Common myeloid progenitor, CD34-positive (primary cell): ENCODE measurements at regions of chr1 and their contacts with region 1.

Region 1: DNA sequence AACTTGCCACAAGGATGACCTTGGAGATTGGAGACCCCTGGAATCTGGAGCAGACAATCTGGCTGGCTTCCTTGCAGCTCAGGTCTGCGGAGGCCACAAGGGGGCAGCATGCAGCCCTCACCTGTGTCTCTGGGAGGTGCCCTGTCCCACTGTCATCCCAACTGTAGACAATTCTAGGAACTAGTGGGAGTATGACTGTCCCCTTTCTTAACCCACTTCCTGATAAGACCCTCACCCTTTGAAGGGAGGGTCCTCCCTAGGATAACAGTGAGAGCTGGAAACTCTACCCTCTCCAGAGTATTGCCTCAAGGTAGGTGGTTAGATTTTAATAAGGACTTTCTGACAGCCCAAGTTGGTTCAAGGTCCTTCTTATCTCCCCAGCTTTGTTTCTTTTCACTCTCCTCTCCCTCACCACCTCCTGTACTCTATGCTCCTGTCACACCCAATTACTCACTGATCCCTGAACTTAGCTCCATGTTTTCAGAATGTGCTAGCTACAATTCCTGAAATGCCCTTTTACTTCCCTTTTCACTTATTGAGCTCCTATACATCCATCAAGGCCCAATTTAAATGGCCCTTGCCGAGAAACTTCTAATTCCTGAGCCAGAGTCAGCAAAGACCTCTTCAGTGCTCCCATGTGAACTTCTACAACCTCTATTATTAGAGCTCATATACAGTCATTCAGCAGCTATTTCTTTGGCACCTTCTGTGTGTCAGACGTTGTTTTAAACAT is 9.2 kb upstream of the KCNQ4 start:
- DNase-seq: peak; percentile 49 to 63 (median 56)
- H3K4me3 ChIP-seq: no peak overlapping the region
- H3K27ac ChIP-seq: no peak overlapping the region
- H3K4me1 ChIP-seq: peaks cover 8 to 14% (median 12%) of the 10 kb centered on the region in 4 experiments
- H3K27me3 ChIP-seq: no peaks in the 10 kb centered on the region

Region 2: DNA sequence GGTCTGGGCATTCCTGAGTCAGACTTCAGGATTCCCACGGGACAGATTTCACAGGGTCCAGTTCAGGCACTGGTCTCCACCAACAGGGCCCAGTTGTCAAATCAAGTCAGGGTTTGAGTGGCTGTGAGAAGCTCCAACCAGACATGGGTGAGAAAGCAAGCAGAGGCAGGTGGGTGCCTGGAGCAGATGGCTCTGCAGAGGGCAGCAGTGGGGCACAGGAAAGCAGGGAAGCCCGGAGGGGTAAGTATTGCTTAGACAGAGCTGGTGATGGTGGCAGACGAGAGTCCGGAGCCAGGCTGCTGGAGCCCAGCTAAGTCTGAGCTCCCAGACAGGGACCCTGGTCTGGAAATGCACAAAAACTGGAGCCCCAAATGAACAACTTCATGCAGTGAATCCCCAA is 149.4 kb before region 1 on chr1:
- CTCF ChIA-PET with region 1: interaction called, 12 read pairs
- POLR2A ChIA-PET with region 1: no interaction called
- DNase-seq: peak; percentile 36 to 60 (median 58)
- H3K4me3 ChIP-seq: no peak overlapping the region
- H3K27ac ChIP-seq: no peak overlapping the region
- H3K4me1 ChIP-seq: peaks cover 0 to 22% (median 12%) of the 10 kb centered on the region in 4 experiments
- H3K27me3 ChIP-seq: peaks cover 0 to 2% (median 0%) of the 10 kb centered on the region in 5 experiments

Region 3: GRCh38 chr1:40763742-40764532 is 10.5 kb before region 1 on chr1:
- CTCF ChIA-PET with region 1: interaction called, 30 read pairs
- POLR2A ChIA-PET with region 1: no interaction called
- DNase-seq: no peak
- H3K4me3 ChIP-seq: no peak overlapping the region
- H3K27ac ChIP-seq: no peak overlapping the region
- H3K4me1 ChIP-seq: peaks cover 0 to 7% (median 2%) of the 10 kb centered on the region in 4 experiments
- H3K27me3 ChIP-seq: no peaks in the 10 kb centered on the region

Region 4: GRCh38 chr1:40802078-40802741 is 27.8 kb after region 1 on chr1:
- CTCF ChIA-PET with region 1: interaction called, 71 read pairs
- POLR2A ChIA-PET with region 1: no interaction called
- DNase-seq: peak; percentile 87 to 93 (median 90)
- H3K4me3 ChIP-seq: peak overlapping the region; percentile 6 to 78 (median 53)
- H3K27ac ChIP-seq: peak overlapping the region in 1 of 2 experiments; percentile 40
- H3K4me1 ChIP-seq: peaks cover 4 to 63% (median 46%) of the 10 kb centered on the region in 4 experiments
- H3K27me3 ChIP-seq: no peaks in the 10 kb centered on the region

Region 5: GRCh38 chr1:40825435-40825788 is 51.0 kb after region 1 on chr1:
- CTCF ChIA-PET with region 1: interaction called, 21 read pairs
- POLR2A ChIA-PET with region 1: no interaction called
- DNase-seq: peak in 2 of 3 donors; percentile 66 to 71
- H3K4me3 ChIP-seq: peak overlapping the region in 1 of 7 experiments; percentile 23
- H3K27ac ChIP-seq: no peak overlapping the region
- H3K4me1 ChIP-seq: peaks cover 0 to 33% (median 28%) of the 10 kb centered on the region in 4 experiments
- H3K27me3 ChIP-seq: no peaks in the 10 kb centered on the region

Region 6: DNA sequence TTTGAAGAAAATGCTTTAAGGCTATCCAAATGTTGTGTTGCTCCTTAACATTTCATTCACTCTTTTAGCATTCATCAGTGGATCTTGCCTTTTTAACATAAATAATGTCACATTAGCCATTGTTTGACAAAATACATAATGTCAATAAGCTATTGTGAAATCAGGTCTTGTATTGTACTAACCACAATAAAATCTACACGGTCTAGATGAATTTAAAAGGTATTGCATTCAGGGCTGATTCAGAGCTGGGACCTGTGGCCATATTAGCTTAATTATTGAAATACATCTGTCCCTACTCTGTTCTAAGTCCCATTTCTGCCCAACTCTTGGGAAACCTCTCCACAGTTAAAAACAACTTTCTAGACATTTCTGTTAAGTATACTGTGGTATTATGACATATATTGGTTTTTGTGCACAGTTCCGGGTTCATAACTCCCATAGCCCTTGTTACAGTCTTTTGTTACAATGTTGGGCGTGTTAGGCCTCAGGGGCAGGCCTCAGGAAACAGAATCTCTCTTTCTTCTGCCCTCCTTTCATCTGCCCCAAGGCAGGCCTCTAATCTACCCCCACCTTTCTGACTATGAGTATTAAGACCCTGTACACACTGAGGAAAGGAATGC is 132.5 kb after region 1 on chr1:
- CTCF ChIA-PET with region 1: no interaction called
- POLR2A ChIA-PET with region 1: no interaction called
- DNase-seq: no peak
- H3K4me3 ChIP-seq: no peak overlapping the region
- H3K27ac ChIP-seq: no peak overlapping the region
- H3K4me1 ChIP-seq: no peaks in the 10 kb centered on the region
- H3K27me3 ChIP-seq: no peaks in the 10 kb centered on the region

Region 7: DNA sequence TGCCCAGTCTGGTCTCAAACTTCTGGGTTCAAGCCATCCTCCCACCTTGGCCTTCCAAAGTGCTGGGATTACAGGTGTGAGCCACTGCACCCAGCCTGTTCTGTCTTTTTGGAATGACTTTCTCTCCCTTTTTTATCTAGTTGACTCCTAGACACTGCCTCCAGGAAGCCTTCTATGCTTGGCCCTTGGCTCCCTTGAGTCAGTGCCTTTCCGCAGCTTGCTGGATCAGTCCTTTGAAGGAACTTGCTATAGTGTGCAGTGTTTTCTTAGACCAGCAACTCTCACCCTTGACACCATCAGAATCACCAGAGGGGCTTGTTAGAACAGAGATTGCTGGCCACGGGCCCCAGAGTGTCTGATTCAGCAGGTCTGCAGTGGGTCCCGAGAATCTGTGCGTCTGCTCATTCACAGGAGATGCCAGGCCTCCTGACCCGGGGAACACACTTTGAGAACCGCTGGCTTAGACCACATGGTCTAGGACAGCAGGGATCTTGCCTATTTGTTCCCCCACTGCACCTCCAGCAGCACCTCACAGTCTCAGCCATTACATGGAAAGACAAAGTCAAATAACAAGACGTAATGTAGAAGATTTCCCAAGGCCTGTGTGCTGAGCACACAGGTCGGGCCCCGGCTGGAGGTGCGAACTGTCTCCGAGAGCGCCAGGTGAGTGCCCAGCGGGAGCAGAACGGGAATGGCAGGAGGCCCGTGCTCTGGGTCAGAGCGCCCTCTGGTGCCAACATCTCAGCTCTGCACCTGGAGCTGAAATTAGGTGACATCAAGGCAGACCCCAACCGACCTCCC is 177.7 kb after region 1 on chr1:
- CTCF ChIA-PET with region 1: interaction called, 90 read pairs
- POLR2A ChIA-PET with region 1: no interaction called
- DNase-seq: peak; percentile 34 to 49 (median 40)
- H3K4me3 ChIP-seq: peak overlapping the region in 2 of 7 experiments; percentile 11 to 31
- H3K27ac ChIP-seq: no peak overlapping the region
- H3K4me1 ChIP-seq: peaks cover 0 to 9% (median 4%) of the 10 kb centered on the region in 4 experiments
- H3K27me3 ChIP-seq: peaks cover 0 to 42% (median 15%) of the 10 kb centered on the region in 5 experiments